IMR-90 (cell line): ENCODE measurements at regions of chr12 and their contacts with region 1.

Region 1: GRCh38 chr12:46492471-46493351 is 120.1 kb upstream of the SLC38A2 start:
- DNase-seq: peak; percentile 97
- ATAC-seq: peak; percentile 65
- H3K4me3 ChIP-seq: no peak overlapping the region
- H3K27ac ChIP-seq: peak overlapping the region; percentile 93; the same call in 1 of the 2 replicates
- H3K4me1 ChIP-seq: peaks cover 27% of the 10 kb centered on the region
- H3K27me3 ChIP-seq: no peaks in the 10 kb centered on the region
- CTCF ChIP-seq: no peak
- POLR2A ChIP-seq: no peak
- RAD21 ChIP-seq: no peak

Region 2: GRCh38 chr12:46430340-46430948 is 62.3 kb before region 1 on chr12:
- CTCF ChIA-PET with region 1: no interaction called
- POLR2A ChIA-PET with region 1: interaction called, 3 read pairs
- dilution Hi-C with region 1: no loop called
- in situ Hi-C with region 1: no loop called
- intact Hi-C with region 1: loop called (anchors 2 kb)
- DNase-seq: peak; percentile 89
- ATAC-seq: peak; percentile 15; the same call in 1 of the 2 replicates
- H3K4me3 ChIP-seq: no peak overlapping the region
- H3K27ac ChIP-seq: peak overlapping the region; percentile 66
- H3K4me1 ChIP-seq: peaks cover 10% of the 10 kb centered on the region
- H3K27me3 ChIP-seq: no peaks in the 10 kb centered on the region
- CTCF ChIP-seq: no peak
- POLR2A ChIP-seq: no peak
- RAD21 ChIP-seq: no peak